ENCODE measurements at regions of chr13 and their contacts with region 1.

Region 1: DNA sequence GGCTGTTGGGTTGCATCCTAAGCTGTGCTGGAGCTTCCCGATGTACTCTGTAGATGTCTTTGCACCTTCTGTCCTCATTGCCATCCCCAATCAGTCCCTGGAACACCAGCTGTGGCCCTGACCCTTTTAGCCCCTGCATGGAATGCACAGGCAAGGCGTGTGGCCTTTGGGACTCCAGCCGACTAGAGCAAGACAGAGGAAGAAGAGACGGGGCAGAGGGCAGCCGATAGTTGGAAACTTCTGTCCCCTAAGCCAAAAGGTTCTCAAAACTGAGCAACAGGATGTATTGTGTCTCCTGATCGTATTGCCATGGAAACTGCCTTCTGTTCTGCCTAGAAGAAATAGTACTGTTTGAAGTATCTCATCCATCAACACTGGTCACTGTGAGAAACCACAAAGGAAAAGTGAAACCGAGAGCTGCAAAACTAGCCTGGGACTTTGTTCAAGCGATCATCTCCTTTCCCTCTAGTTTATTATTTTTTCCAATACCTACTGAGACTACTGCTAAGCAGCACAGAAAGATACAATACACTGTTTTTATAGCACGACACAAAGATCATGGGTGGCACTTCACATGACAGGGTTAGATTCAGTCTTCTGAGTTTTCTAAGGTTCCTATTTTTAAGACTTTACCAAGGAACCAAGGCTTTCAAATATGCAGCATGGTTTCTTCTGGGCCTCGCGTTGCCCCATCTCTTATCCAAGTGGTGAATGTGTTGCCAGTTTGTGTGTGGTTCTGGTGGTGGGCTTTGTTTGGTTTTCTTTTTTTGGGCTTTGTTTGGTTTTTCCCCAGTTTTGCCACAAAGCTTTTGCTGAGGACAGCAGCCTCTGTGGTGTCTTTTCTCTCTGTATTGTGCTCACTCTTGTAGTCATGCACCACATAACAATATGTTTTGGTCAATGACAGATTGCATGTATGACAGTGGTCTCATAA is 49.2 kb upstream of the GPR183 start:
- DNase-seq: peak; percentile 34 to 94 (median 82)
- ATAC-seq: peak; percentile 59 to 68
- H3K4me3 Mint-ChIP-seq: peak overlapping the region; percentile 61 to 85 (median 78)
- H3K27ac Mint-ChIP-seq: peak overlapping the region; percentile 96 to 100 (median 99)
- H3K4me1 Mint-ChIP-seq: peaks cover 72 to 100% (median 98%) of the 10 kb centered on the region in 4 donors
- H3K27me3 Mint-ChIP-seq: peaks cover 0 to 1% (median 0%) of the 10 kb centered on the region in 5 donors

Region 2: GRCh38 chr13:99228737-99229691 is 127.4 kb before region 1 on chr13:
- POLR2A ChIA-PET with region 1: no interaction called
- DNase-seq: peak in 1 of 10 donors; percentile 24
- ATAC-seq: peak; percentile 49 to 58
- H3K4me3 Mint-ChIP-seq: peak overlapping the region; percentile 66 to 89 (median 81)
- H3K27ac Mint-ChIP-seq: peak overlapping the region; percentile 73 to 95 (median 90)
- H3K4me1 Mint-ChIP-seq: peaks cover 42 to 91% (median 79%) of the 10 kb centered on the region in 4 donors
- H3K27me3 Mint-ChIP-seq: no peaks in the 10 kb centered on the region

Region 3: DNA sequence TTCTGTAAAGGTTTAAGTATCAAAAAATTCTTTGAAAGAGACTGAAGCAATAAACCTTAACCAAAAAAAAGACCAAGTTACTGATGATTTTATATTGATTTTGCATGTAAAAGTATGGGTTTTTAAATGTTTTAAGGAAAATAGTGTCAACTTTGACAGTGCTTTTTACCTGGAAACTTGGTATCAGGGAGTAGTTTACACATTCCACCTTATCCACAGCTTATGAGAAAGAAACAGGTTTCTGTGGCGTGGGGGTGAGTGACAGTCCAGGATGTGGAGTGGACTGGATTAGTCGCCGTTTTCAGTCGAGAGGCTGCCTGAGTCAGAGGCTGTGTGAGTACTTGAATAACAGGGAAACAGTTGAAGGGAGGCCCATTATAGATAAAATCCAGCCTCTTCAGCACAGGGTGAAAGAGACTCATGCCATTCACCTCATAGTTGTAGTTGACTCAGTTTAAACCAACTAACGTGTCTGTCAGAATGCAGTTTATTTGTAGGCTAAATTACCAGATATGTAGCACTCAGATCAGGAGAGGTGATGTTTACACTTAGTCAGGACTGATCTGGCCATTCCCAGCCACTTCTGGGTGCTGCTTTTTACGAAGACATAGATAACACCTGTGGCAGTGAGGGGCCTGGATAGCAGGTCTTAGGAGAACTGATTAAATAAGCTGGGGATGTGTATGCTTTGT is 48.6 kb before region 1 on chr13:
- POLR2A ChIA-PET with region 1: interaction called, 10 read pairs
- DNase-seq: no peak
- ATAC-seq: peak; percentile 18 to 34
- H3K4me3 Mint-ChIP-seq: peak overlapping the region; percentile 68 to 96 (median 82)
- H3K27ac Mint-ChIP-seq: peak overlapping the region; percentile 75 to 94 (median 87)
- H3K4me1 Mint-ChIP-seq: peaks cover 32 to 90% (median 87%) of the 10 kb centered on the region in 4 donors
- H3K27me3 Mint-ChIP-seq: no peaks in the 10 kb centered on the region

Region 4: GRCh38 chr13:99374994-99375737 is 18.7 kb after region 1 on chr13:
- POLR2A ChIA-PET with region 1: interaction called, 155 read pairs
- DNase-seq: peak; percentile 57 to 96 (median 86)
- ATAC-seq: peak; percentile 81 to 93
- H3K4me3 Mint-ChIP-seq: peak overlapping the region; percentile 55 to 86 (median 76)
- H3K27ac Mint-ChIP-seq: peak overlapping the region; percentile 96 to 100 (median 99)
- H3K4me1 Mint-ChIP-seq: peaks cover 55 to 97% (median 86%) of the 10 kb centered on the region in 4 donors
- H3K27me3 Mint-ChIP-seq: no peaks in the 10 kb centered on the region

Region 5: GRCh38 chr13:99386911-99387788 is 30.7 kb after region 1 on chr13:
- POLR2A ChIA-PET with region 1: interaction called, 138 read pairs
- DNase-seq: peak; percentile 73 to 91 (median 87)
- ATAC-seq: peak; percentile 15 to 20
- H3K4me3 Mint-ChIP-seq: peak overlapping the region in 9 of 10 donors; percentile 29 to 83 (median 57)
- H3K27ac Mint-ChIP-seq: peak overlapping the region; percentile 96 to 100 (median 98)
- H3K4me1 Mint-ChIP-seq: peaks cover 33 to 74% (median 67%) of the 10 kb centered on the region in 4 donors
- H3K27me3 Mint-ChIP-seq: no peaks in the 10 kb centered on the region

Measured in naive thymus-derived CD8-positive, alpha-beta T cell (primary cell).